ENCODE measurements at regions of chr17 and their contacts with region 1.

Region 1: GRCh38 chr17:76278952-76279741 is 14.0 kb downstream of the UBALD2 start:
- DNase-seq: no peak
- ATAC-seq: peak; percentile 96
- H3K4me3 ChIP-seq: no peak overlapping the region
- H3K27ac ChIP-seq: no peak overlapping the region
- H3K4me1 ChIP-seq: no peaks in the 10 kb centered on the region; the same call in 1 of the 2 replicates
- H3K27me3 ChIP-seq: no peaks in the 10 kb centered on the region
- CTCF ChIP-seq: peak; percentile 89 to 97 (median 93)
- EP300 ChIP-seq: no peak
- POLR2A ChIP-seq: no peak
- RAD21 ChIP-seq: peak; percentile 100

Region 2: DNA sequence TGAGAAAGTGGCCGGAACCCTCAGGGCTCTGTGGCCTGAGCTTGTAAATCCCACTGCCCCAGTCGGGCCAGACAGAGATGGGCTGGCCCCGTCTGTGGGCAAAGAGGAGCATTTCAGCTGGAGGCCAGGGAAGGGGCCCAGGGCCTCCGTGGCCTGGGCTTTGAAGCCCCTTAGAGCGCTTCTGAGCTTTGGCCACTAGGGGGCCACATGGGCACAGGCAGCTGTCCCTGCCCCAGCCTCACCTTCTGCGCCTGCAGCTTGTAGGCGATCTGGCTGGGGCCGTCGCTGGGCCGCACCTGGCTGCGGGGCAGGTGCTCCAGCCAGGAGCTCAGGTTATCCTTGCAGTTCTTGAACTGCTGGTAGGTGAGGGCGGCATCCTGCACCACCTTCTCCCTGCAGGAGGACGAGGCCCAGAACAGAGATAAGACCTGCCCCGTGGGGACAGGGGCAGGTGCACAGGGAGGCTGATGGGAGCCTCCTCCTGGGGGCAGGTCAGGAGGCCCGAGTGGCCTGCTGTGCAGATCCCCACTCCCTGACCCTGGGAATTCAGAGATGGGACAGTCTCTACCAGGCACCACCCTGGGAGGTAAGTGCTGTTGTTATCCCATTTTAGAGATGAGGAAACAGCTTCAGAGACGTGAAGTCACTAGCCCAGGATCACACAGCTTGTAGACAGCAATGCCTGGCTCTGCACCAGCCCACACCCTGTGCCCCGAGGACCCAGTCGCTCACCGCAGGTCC is 264.8 kb before region 1 on chr17:
- CTCF ChIA-PET with region 1: interaction called, 28 read pairs
- POLR2A ChIA-PET with region 1: no interaction called
- RAD21 ChIA-PET with region 1: interaction called, 18 read pairs
- SMC1A ChIA-PET with region 1: interaction called, 8 read pairs
- in situ Hi-C with region 1: no loop called
- intact Hi-C with region 1: loop called (anchors 1 kb)
- DNase-seq: no peak
- ATAC-seq: peak; percentile 99
- H3K4me3 ChIP-seq: no peak overlapping the region
- H3K27ac ChIP-seq: no peak overlapping the region
- H3K4me1 ChIP-seq: no peaks in the 10 kb centered on the region
- H3K27me3 ChIP-seq: no peaks in the 10 kb centered on the region
- CTCF ChIP-seq: peak; percentile 86 to 99 (median 94)
- EP300 ChIP-seq: no peak
- POLR2A ChIP-seq: no peak
- RAD21 ChIP-seq: peak; percentile 80

Region 3: DNA sequence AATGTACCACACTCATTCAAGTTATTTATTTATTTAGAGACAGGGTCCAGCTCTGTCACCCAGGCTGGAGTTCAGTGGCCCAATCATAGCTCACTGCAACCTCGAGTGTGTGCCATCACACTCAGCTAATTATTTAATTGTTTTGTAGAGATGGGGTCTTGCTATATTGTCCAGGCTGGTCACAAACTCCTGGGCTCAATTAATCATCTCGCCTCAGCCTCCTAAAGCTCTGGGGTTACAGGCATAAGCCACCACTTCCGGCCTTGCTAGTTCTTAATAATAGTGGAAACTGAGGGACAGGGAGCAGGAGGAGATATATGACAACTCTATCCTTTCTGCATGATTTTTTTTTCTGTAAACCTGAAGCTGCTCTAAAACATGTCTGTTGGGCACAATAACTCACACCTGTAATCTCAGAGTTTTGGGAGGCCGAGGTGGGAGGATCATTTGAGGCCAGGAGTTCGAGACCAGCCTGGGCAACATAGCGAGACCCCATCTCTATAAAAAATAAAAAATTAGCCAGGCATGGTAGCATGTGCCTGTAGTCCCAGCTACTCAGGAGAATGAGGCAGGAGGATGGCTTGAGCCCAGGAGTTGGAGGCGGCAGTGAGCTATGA is 163.9 kb before region 1 on chr17:
- CTCF ChIA-PET with region 1: interaction called, 316 read pairs
- POLR2A ChIA-PET with region 1: interaction called, 5 read pairs
- RAD21 ChIA-PET with region 1: interaction called, 149 read pairs
- SMC1A ChIA-PET with region 1: interaction called, 53 read pairs
- in situ Hi-C with region 1: loop called (anchors 5 kb)
- intact Hi-C with region 1: no loop called
- DNase-seq: no peak
- ATAC-seq: no peak
- H3K4me3 ChIP-seq: no peak overlapping the region
- H3K27ac ChIP-seq: no peak overlapping the region
- H3K4me1 ChIP-seq: no peaks in the 10 kb centered on the region
- H3K27me3 ChIP-seq: no peaks in the 10 kb centered on the region
- CTCF ChIP-seq: no peak
- EP300 ChIP-seq: no peak
- POLR2A ChIP-seq: no peak
- RAD21 ChIP-seq: no peak

Region 4: DNA sequence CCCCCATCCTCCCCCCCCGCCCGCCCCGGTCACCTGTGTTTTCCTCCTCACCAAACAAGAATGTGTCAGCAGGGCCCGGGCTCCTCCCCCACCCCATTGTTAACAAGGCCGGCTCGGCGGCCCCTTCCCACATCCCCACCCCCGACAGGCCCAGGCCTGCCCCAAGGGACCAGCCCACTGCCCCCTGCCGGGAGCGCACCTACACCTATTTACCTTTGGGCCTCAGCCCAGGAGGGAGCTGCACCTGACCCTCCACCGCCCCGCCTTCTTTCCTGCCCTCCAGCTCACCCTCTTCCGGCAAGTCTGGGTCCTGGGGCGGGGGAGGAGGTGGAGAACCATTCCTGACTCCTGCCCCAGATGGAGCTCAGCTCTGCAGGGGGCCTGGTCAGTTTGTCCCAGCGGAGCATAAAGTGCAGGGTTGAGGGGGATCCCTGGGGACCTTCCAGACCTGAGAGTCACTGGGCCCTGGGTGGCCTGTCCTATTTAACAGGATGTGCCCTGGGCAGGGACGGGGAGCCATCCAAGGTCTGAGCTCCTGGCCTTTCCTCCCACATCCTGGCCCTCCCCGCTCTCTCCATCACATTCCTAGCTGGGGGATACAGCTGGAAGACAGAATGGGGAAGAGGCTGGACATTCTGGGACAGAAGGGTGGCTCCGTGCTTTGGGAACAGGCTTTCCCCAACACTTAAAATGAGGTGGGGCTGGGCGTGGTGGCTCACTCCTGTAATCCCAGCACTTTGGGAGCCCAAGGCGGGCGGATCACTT is 146.4 kb before region 1 on chr17:
- CTCF ChIA-PET with region 1: interaction called, 316 read pairs
- POLR2A ChIA-PET with region 1: no interaction called
- RAD21 ChIA-PET with region 1: interaction called, 75 read pairs
- SMC1A ChIA-PET with region 1: interaction called, 63 read pairs
- in situ Hi-C with region 1: no loop called
- intact Hi-C with region 1: no loop called
- DNase-seq: no peak
- ATAC-seq: no peak
- H3K4me3 ChIP-seq: no peak overlapping the region
- H3K27ac ChIP-seq: no peak overlapping the region
- H3K4me1 ChIP-seq: peaks cover 5% of the 10 kb centered on the region
- H3K27me3 ChIP-seq: no peaks in the 10 kb centered on the region
- CTCF ChIP-seq: no peak
- EP300 ChIP-seq: no peak
- POLR2A ChIP-seq: no peak
- RAD21 ChIP-seq: no peak

Region 5: GRCh38 chr17:76166168-76166567 is 113.0 kb before region 1 on chr17:
- CTCF ChIA-PET with region 1: interaction called, 18 read pairs
- POLR2A ChIA-PET with region 1: no interaction called
- RAD21 ChIA-PET with region 1: no interaction called
- SMC1A ChIA-PET with region 1: interaction called, 3 read pairs
- in situ Hi-C with region 1: no loop called
- intact Hi-C with region 1: no loop called
- DNase-seq: no peak
- ATAC-seq: no peak
- H3K4me3 ChIP-seq: no peak overlapping the region
- H3K27ac ChIP-seq: no peak overlapping the region
- H3K4me1 ChIP-seq: no peaks in the 10 kb centered on the region
- H3K27me3 ChIP-seq: no peaks in the 10 kb centered on the region
- CTCF ChIP-seq: no peak
- EP300 ChIP-seq: no peak
- POLR2A ChIP-seq: no peak
- RAD21 ChIP-seq: no peak

Region 6: GRCh38 chr17:76208120-76208519 is 71.0 kb before region 1 on chr17:
- CTCF ChIA-PET with region 1: interaction called, 10 read pairs
- POLR2A ChIA-PET with region 1: no interaction called
- RAD21 ChIA-PET with region 1: no interaction called
- SMC1A ChIA-PET with region 1: interaction called, 3 read pairs
- in situ Hi-C with region 1: no loop called
- intact Hi-C with region 1: no loop called
- DNase-seq: peak; percentile 66
- ATAC-seq: peak; percentile 95
- H3K4me3 ChIP-seq: no peak overlapping the region
- H3K27ac ChIP-seq: peak overlapping the region; percentile 51
- H3K4me1 ChIP-seq: peaks cover 17% of the 10 kb centered on the region
- H3K27me3 ChIP-seq: no peaks in the 10 kb centered on the region
- CTCF ChIP-seq: no peak
- EP300 ChIP-seq: no peak
- POLR2A ChIP-seq: no peak
- RAD21 ChIP-seq: no peak

Region 7: GRCh38 chr17:76296186-76296585 is 17.0 kb after region 1 on chr17:
- CTCF ChIA-PET with region 1: interaction called, 19 read pairs
- POLR2A ChIA-PET with region 1: no interaction called
- RAD21 ChIA-PET with region 1: interaction called, 4 read pairs
- SMC1A ChIA-PET with region 1: interaction called, 8 read pairs
- in situ Hi-C with region 1: no loop called
- intact Hi-C with region 1: no loop called
- DNase-seq: no peak
- ATAC-seq: no peak
- H3K4me3 ChIP-seq: no peak overlapping the region
- H3K27ac ChIP-seq: no peak overlapping the region
- H3K4me1 ChIP-seq: no peaks in the 10 kb centered on the region
- H3K27me3 ChIP-seq: no peaks in the 10 kb centered on the region
- CTCF ChIP-seq: no peak
- EP300 ChIP-seq: no peak
- POLR2A ChIP-seq: no peak
- RAD21 ChIP-seq: no peak